ENCODE measurements at regions of chr2 and their contacts with region 1.

Region 1: GRCh38 chr2:231786177-231786916 is at the start of gene COPS7B:
- DNase-seq: peak; percentile 86
- H3K4me3 ChIP-seq: peak within 1 kb of the TSS; percentile 77 to 100 (median 92)
- H3K27ac ChIP-seq: peak within 1 kb of the TSS; percentile 78 to 84 (median 80)
- H3K4me1 ChIP-seq: peaks cover 0 to 51% (median 46%) of the 10 kb centered on the region in 4 donors
- H3K27me3 ChIP-seq: no peaks in the 10 kb centered on the region
- CTCF ChIP-seq: no peak
- EP300 ChIP-seq: peak in 1 of 4 donors; percentile 13
- POLR2A ChIP-seq: no peak
- total RNA-seq, gene COPS7B: 16.8 to 43.8 (median 24.9) TPM

Region 2: DNA sequence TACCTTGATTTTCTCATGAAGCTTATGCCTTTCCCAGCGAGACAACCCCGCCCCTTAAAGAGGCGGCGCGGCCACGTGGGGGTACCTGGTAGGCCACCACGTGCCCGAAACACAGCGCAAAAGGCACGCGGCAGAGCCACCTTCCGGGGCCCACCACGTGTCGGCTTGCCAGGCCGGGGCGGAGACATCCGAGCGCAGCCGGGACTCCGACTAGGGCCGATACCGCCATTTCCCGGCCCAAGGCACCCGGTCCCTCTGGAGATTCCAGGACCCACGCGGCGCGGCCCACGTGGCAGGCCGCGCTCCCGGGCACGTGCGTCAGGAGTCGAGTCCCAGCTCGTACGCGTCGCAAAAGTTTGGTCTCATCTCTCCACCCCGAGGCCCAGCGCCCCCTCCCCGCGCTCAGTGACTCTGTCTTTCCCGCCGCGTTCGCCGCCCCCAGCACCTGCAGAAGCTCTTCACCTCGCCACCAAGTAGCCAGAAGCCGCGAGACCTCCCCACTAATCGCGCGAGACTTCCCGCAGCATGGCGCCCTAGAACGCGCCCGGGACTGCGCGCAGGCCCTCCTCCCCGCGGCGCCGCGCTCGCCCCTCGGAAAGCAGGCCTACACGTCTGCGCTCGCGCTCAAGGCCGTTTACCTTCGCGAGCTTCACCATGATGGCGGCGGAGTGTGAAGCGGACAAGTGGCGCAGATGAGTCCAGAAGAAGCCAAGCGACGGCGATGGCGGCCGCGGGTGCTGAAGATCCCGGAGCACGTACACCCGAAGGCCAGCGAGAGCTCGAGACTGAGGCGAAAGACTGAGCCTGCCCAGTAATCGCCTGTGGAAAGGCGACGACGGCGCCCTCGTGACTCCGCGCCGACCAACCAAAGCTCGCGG is 322.4 kb before region 1 on chr2 and contains the start of gene NCL:
- intact Hi-C with region 1: loop called (anchors 5 kb)
- DNase-seq: peak; percentile 99
- H3K4me3 ChIP-seq: peak within 1 kb of the TSS; percentile 83 to 93 (median 90)
- H3K27ac ChIP-seq: peak within 1 kb of the TSS; percentile 94 to 99 (median 98)
- H3K4me1 ChIP-seq: peaks cover 0 to 43% (median 31%) of the 10 kb centered on the region in 4 donors
- H3K27me3 ChIP-seq: no peaks in the 10 kb centered on the region
- CTCF ChIP-seq: no peak
- EP300 ChIP-seq: no peak
- POLR2A ChIP-seq: peak; percentile 94 to 98
- total RNA-seq, gene NCL: 100 to 227 (median 126) TPM

Region 3: GRCh38 chr2:231687133-231687852 is 99.1 kb before region 1 on chr2:
- intact Hi-C with region 1: loop called (anchors 10 kb)
- DNase-seq: peak; percentile 83
- H3K4me3 ChIP-seq: no peak overlapping the region
- H3K27ac ChIP-seq: no peak overlapping the region
- H3K4me1 ChIP-seq: peaks cover 0 to 8% (median 4%) of the 10 kb centered on the region in 4 donors
- H3K27me3 ChIP-seq: no peaks in the 10 kb centered on the region
- CTCF ChIP-seq: peak in 3 of 4 experiments; percentile 26 to 46 (median 36)
- EP300 ChIP-seq: no peak
- POLR2A ChIP-seq: no peak

Region 4: DNA sequence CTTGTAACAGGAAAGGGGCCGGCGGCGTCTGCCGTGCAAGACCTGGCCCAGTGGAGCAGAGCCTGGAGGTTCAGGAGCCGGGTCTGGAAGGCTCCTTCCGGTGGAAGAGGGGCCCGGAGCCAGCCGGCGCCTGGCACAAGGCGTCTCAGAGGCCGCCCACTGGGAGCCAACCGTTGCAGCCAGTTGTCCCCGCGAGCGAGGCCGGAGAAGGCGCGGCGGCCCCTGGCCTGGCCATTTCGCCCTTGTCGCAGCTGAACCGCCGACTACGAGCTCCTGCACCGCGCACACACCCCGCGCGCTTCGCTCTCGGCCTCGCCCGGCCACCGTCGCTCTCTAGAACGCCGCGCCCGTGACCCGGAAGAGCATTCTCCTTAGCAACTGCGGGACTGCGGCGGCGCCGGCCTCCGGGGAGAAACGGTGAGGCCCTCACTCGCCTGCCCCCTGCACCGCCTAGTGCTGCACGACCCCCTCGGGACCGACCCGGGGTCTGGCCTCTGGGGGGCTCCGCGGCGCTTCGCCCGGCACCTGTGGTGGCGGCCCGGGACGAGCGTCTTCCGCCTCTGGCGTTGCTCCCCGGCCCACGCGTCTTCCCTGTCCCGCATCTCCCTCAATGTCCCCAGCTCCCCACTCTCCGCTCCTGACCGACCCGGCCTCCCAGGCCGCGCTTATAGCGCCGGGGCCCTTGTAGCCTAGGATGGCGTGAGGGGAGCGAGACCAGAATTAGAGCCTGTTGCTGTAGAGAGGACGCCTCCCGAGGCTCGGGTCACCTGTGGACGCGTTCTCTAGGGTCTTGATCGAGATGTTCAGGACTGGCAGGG is 175.2 kb after region 1 on chr2 and contains the start of gene DIS3L2:
- intact Hi-C with region 1: loop called (anchors 2 kb)
- DNase-seq: peak; percentile 88
- H3K4me3 ChIP-seq: peak within 1 kb of the TSS; percentile 74 to 92 (median 84)
- H3K27ac ChIP-seq: peak within 1 kb of the TSS; percentile 78 to 84 (median 82)
- H3K4me1 ChIP-seq: peaks cover 0 to 23% (median 18%) of the 10 kb centered on the region in 4 donors
- H3K27me3 ChIP-seq: no peaks in the 10 kb centered on the region
- CTCF ChIP-seq: no peak
- EP300 ChIP-seq: peak in 1 of 4 donors; percentile 25
- POLR2A ChIP-seq: peak in 1 of 2 donors; percentile 32
- total RNA-seq, gene DIS3L2: 22.5 to 37.9 (median 30.8) TPM

Region 5: DNA sequence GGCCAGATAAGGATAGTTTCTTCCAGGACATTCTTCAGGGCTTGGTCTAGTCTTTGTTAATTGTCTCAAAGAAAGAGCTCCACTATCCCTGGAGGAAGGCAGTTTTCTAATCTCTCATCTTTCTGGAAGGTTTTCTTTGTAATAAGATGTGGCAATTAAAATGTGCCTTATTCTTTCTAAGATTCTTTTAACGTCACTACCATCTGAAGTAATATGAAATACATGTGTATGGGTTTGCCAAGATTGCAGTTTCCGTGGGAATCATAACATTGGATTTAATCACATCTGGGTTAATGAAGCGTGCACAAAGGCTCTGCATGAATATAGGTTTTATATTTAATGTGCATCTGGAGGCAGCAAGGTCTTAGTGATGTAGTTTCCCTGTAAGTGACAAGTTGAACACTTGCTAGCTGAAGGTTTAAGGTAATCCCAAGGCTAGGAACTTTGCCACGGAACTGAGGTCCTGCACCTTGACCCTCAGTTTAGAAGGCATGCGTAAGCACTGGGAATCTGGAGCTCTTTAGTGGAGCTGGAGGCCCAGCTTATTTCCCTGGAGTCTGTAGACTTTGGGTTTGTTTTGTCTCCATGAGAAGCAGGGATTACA is 200.9 kb after region 1 on chr2:
- intact Hi-C with region 1: no loop called
- DNase-seq: no peak
- H3K4me3 ChIP-seq: no peak overlapping the region
- H3K27ac ChIP-seq: no peak overlapping the region
- H3K4me1 ChIP-seq: peaks cover 0 to 27% (median 11%) of the 10 kb centered on the region in 4 donors
- H3K27me3 ChIP-seq: no peaks in the 10 kb centered on the region
- CTCF ChIP-seq: no peak
- EP300 ChIP-seq: no peak
- POLR2A ChIP-seq: no peak